CD4-positive, alpha-beta memory T cell (primary cell): ENCODE measurements at regions of chr10 and their contacts with region 1.

Region 1: DNA sequence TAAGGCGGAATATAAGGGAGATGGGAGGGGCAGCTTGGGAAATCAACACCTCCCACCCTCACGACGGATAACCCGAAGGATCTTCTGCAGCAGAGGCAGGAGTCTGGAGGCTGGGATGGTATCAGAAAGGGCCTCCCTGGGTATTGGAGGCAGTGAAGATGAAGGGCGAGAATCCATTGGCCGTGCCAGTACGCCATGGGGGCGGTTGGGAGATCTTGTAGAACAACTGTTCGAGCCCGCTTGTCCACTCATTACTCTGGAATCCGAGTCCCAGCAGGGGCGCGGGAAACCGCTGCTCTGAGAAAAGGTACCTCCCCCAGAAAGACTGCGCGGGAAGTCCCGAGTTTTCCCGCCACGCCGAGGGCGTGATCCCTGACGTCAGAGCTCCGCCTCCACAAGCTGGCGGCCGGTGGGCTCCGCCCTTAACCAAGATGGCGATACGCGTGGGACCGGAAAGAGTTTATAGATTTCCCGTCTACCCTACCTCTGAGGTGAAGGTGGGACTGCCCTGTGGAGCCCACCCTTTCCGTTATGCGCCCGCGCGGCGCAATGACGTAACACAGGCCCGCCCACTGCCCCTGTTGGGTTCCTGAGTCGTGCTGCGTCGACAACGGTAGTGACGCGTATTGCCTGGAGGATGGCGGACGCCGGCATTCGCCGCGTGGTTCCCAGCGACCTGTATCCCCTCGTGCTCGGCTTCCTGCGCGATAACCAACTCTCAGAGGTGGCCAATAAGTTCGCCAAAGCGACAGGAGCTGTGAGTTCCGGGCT is at the start of gene NOLC1:
- DNase-seq: peak; percentile 99 to 100 (median 100)
- H3K4me3 ChIP-seq: peak within 1 kb of the TSS; percentile 82 to 91
- H3K4me3 Mint-ChIP-seq: peak within 1 kb of the TSS; percentile 91 to 97 (median 94)
- H3K27ac ChIP-seq: peak within 1 kb of the TSS; percentile 87
- H3K27ac Mint-ChIP-seq: peak within 1 kb of the TSS; percentile 91 to 99 (median 97)
- H3K4me1 ChIP-seq: peaks cover 34% of the 10 kb centered on the region
- H3K4me1 Mint-ChIP-seq: peaks cover 21 to 60% (median 42%) of the 10 kb centered on the region in 4 donors
- H3K27me3 ChIP-seq: no peaks in the 10 kb centered on the region
- H3K27me3 Mint-ChIP-seq: no peaks in the 10 kb centered on the region
- total RNA-seq, gene NOLC1: 63.7 to 71.6 TPM

Region 2: GRCh38 chr10:102055647-102056419 is 96.1 kb before region 1 on chr10 and contains the start of gene ARMH3:
- CTCF ChIA-PET with region 1: no interaction called
- POLR2A ChIA-PET with region 1: interaction called, 10 read pairs
- intact Hi-C with region 1: no loop called
- DNase-seq: peak; percentile 89 to 92 (median 90)
- H3K4me3 ChIP-seq: peak within 1 kb of the TSS; percentile 89 to 99
- H3K4me3 Mint-ChIP-seq: peak within 1 kb of the TSS; percentile 95 to 98 (median 96)
- H3K27ac ChIP-seq: peak within 1 kb of the TSS; percentile 88
- H3K27ac Mint-ChIP-seq: peak within 1 kb of the TSS; percentile 94 to 99 (median 97)
- H3K4me1 ChIP-seq: peaks cover 51% of the 10 kb centered on the region
- H3K4me1 Mint-ChIP-seq: peaks cover 31 to 54% (median 42%) of the 10 kb centered on the region in 4 donors
- H3K27me3 ChIP-seq: no peaks in the 10 kb centered on the region
- H3K27me3 Mint-ChIP-seq: no peaks in the 10 kb centered on the region
- total RNA-seq, gene ARMH3: 31.4 to 31.8 TPM

Region 3: GRCh38 chr10:102114861-102115618 is 36.9 kb before region 1 on chr10:
- CTCF ChIA-PET with region 1: no interaction called
- POLR2A ChIA-PET with region 1: interaction called, 17 read pairs
- intact Hi-C with region 1: loop called (anchors 1 kb)
- DNase-seq: peak; percentile 69 to 86 (median 73)
- H3K4me3 ChIP-seq: peak overlapping the region; percentile 50 to 54
- H3K4me3 Mint-ChIP-seq: peak overlapping the region; percentile 85 to 97 (median 93)
- H3K27ac ChIP-seq: peak overlapping the region; percentile 90
- H3K27ac Mint-ChIP-seq: peak overlapping the region; percentile 89 to 97 (median 96)
- H3K4me1 ChIP-seq: peaks cover 67% of the 10 kb centered on the region
- H3K4me1 Mint-ChIP-seq: peaks cover 44 to 77% (median 61%) of the 10 kb centered on the region in 4 donors
- H3K27me3 ChIP-seq: no peaks in the 10 kb centered on the region
- H3K27me3 Mint-ChIP-seq: no peaks in the 10 kb centered on the region

Region 4: GRCh38 chr10:102132563-102133372 is 19.2 kb before region 1 on chr10 and contains the start of gene PPRC1:
- CTCF ChIA-PET with region 1: interaction called, 17 read pairs
- POLR2A ChIA-PET with region 1: interaction called, 13 read pairs
- intact Hi-C with region 1: loop called (anchors 1 kb)
- DNase-seq: peak; percentile 97 to 99 (median 97)
- H3K4me3 ChIP-seq: peak within 1 kb of the TSS; percentile 55 to 61
- H3K4me3 Mint-ChIP-seq: peak within 1 kb of the TSS; percentile 92 to 99 (median 96)
- H3K27ac ChIP-seq: peak within 1 kb of the TSS; percentile 88
- H3K27ac Mint-ChIP-seq: peak within 1 kb of the TSS; percentile 93 to 99 (median 96)
- H3K4me1 ChIP-seq: peaks cover 38% of the 10 kb centered on the region
- H3K4me1 Mint-ChIP-seq: peaks cover 27 to 50% (median 38%) of the 10 kb centered on the region in 4 donors
- H3K27me3 ChIP-seq: no peaks in the 10 kb centered on the region
- H3K27me3 Mint-ChIP-seq: no peaks in the 10 kb centered on the region
- total RNA-seq, gene PPRC1: 38.9 to 39.8 TPM

Region 5: DNA sequence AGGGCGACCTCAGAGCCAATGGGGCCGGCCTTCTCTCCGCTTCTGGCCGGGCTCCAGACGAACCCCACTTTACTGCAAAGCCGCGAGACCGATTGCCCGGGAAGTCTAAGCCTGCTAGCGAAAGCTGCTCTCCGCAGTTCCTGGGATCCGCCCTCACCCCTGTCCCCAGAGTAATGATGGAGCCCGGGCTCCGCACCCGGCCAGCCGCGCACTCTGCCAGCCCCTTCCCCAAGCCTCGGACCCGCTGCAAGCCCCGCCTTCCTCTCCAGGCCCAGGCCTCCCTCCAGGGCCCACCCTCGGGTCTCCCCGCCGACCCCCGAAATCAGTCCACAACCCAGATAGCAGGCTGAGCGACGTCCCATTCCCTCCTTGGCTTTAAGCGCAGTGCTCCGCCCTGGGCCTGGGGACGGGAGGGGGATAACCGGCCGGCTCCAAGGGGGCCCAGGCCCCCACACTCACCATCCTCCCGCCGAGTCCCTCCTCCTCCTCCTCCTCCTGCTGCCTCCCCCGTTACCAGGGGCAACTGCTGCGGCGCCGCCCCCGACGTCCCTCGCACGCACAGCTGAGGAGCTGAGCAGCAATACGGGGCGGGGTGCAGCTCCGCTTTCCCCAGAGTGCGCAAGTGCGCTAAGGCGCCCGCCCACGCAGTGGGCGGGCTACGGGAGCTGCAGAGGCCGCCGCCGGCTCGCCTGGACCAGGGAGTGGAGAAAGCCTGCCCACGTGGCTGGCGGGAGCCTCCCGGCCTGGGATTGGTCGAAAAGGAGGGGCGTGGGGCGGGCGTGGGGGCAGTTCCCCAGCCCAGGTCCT is 562.1 kb after region 1 on chr10 and contains the start of gene ARL3:
- CTCF ChIA-PET with region 1: no interaction called
- POLR2A ChIA-PET with region 1: no interaction called
- intact Hi-C with region 1: loop called (anchors 5 kb)
- DNase-seq: peak; percentile 89 to 97 (median 92)
- H3K4me3 ChIP-seq: peak within 1 kb of the TSS; percentile 81 to 89
- H3K4me3 Mint-ChIP-seq: peak within 1 kb of the TSS; percentile 90 to 98 (median 96)
- H3K27ac ChIP-seq: peak within 1 kb of the TSS; percentile 94
- H3K27ac Mint-ChIP-seq: peak within 1 kb of the TSS; percentile 90 to 98 (median 96)
- H3K4me1 ChIP-seq: peaks cover 33% of the 10 kb centered on the region
- H3K4me1 Mint-ChIP-seq: peaks cover 34 to 67% (median 41%) of the 10 kb centered on the region in 4 donors
- H3K27me3 ChIP-seq: no peaks in the 10 kb centered on the region
- H3K27me3 Mint-ChIP-seq: no peaks in the 10 kb centered on the region
- total RNA-seq, gene ARL3: 3.7 to 4.0 TPM